ENCODE measurements at regions of chr7 and their contacts with region 1.

Region 1: GRCh38 chr7:26853788-26854393 is 10.5 kb downstream of the SKAP2 start:
- DNase-seq: no peak
- ATAC-seq: peak; percentile 57; the same call in 1 of the 2 replicates
- H3K4me3 ChIP-seq: no peak overlapping the region
- H3K27ac ChIP-seq: peak overlapping the region; percentile 55; the same call in 1 of the 2 replicates
- H3K4me1 ChIP-seq: peaks cover 43% of the 10 kb centered on the region
- H3K27me3 ChIP-seq: no peaks in the 10 kb centered on the region
- CTCF ChIP-seq: peak; percentile 77; the same call in 1 of the 2 replicates

Region 2: DNA sequence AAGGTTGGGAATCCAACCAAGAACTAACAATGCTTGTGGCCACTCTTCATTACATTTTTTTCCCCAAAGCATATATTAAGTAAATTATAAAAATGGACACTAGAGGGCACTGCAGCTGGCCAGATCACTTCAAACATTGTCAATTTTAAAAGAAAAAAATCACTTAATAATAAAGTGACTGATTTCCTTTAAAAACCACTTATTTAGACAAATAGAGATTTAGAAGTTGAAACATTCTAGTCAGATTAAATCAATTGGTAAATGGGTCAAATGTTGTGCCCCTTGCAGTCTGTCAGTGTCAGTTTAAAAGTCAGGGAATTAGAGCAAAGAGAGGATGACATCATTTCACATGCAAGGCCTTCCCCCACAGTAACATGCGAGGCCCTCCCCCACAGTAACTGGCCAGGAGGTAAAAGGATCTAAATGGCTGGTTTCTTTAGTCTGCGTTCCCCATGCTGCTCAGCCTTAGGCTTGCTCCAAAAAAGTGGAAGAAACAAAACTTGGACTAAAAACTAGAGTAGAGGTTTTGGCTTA is 167.4 kb before region 1 on chr7:
- CTCF ChIA-PET with region 1: no interaction called
- POLR2A ChIA-PET with region 1: interaction called, 3 read pairs
- in situ Hi-C with region 1: no loop called
- intact Hi-C with region 1: loop called (anchors 2 kb)
- DNase-seq: peak; percentile 38
- ATAC-seq: 0 out of 2 replicates have a peak, but pooled peaks have one; percentile 51
- H3K4me3 ChIP-seq: no peak overlapping the region
- H3K27ac ChIP-seq: no peak overlapping the region
- H3K4me1 ChIP-seq: peaks cover 6% of the 10 kb centered on the region; the same call in 1 of the 2 replicates
- H3K27me3 ChIP-seq: no peaks in the 10 kb centered on the region
- CTCF ChIP-seq: peak; percentile 86

Region 3: DNA sequence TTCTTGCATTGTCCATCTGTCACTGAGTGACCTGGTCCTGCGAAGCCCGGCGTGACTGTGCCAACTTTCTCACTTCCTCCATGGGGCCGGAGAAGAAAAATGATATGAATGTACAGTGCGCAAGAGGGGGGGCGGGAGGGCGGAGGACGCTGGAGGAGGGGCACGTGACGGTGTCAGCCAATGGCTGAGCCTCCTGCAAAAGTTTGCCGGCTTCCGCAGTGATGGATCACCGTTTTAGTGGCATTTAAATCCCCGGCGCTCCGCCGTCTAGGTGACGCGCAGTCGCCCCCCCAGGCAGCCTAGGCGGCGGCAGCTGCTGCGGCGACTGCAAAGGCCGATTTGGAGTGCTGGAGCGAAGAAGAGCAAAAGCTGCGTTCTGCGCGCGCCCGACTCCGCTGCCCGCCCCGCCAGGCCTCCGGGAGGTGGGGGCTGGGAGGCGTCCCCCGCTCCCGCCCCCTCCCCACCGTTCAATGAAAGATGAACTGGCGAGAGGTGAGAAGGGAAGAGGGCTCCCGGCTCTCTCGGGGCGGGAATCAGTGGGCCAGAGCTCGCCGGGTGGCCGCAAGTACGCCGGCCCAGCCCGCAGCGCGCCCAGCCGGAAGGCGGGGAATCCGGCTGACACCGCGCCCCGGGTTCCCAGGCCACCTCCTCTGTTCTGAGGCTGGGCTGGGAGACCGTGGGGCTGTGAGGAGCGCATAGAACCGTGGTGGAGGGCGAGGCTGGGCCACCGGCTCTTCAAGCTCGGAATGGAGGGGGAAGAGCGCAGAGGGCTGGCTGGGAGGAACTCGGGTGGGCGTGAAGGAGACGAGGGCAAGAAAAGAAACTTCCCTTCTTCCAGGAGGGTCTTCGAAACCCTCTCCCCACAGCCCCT is 242.2 kb after region 1 on chr7 and contains the start of gene HOXA1:
- CTCF ChIA-PET with region 1: interaction called, 6 read pairs
- POLR2A ChIA-PET with region 1: interaction called, 11 read pairs
- in situ Hi-C with region 1: no loop called
- intact Hi-C with region 1: no loop called
- DNase-seq: no peak
- ATAC-seq: peak; percentile 84
- H3K4me3 ChIP-seq: peak within 1 kb of the TSS; percentile 85 to 93
- H3K27ac ChIP-seq: peak within 1 kb of the TSS; percentile 99
- H3K4me1 ChIP-seq: peaks cover 60% of the 10 kb centered on the region
- H3K27me3 ChIP-seq: no peaks in the 10 kb centered on the region
- CTCF ChIP-seq: no peak; the same call in 1 of the 2 replicates
- total RNA-seq, gene HOXA1: 8.8 TPM

Region 4: GRCh38 chr7:27122077-27122910 is 268.4 kb after region 1 on chr7:
- CTCF ChIA-PET with region 1: interaction called, 5 read pairs
- POLR2A ChIA-PET with region 1: interaction called, 14 read pairs
- in situ Hi-C with region 1: no loop called
- intact Hi-C with region 1: no loop called
- DNase-seq: no peak
- ATAC-seq: peak; percentile 46
- H3K4me3 ChIP-seq: peak overlapping the region; percentile 51 to 67
- H3K27ac ChIP-seq: peak overlapping the region; percentile 99
- H3K4me1 ChIP-seq: peaks cover 85% of the 10 kb centered on the region
- H3K27me3 ChIP-seq: no peaks in the 10 kb centered on the region
- CTCF ChIP-seq: no peak

Region 5: DNA sequence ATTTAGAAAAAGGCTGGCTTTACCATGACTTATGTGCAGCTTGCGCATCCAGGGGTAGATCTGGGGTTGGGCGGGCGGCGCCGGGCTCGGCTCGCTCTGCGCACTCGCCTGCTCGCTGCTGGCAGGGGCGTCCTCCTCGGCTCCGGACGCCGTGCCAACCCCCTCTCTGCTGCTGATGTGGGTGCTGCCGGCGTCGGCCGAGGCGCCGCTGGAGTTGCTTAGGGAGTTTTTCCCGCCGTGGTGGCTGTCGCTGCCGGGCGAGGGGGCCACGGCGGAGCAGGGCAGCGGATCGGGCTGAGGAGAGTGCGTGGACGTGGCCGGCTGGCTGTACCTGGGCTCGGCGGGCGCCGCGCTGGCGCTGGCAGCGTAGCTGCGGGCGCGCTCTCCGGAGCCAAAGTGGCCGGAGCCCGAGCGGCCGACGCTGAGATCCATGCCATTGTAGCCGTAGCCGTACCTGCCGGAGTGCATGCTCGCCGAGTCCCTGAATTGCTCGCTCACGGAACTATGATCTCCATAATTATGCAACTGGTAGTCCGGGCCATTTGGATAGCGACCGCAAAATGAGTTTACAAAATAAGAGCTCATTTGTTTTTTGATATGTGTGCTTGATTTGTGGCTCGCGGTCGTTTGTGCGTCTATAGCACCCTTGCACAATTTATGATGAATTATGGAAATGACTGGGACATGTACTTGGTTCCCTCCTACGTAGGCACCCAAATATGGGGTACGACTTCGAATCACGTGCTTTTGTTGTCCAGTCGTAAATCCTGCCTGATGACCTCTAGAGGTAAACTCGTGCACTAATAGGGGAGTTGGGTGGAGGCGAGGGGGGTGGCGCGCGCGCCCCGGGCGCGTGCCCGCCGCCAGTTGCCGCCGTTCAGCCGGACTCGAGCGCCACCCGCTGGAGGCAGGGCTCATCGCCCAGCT is 289.4 kb after region 1 on chr7 and contains the start of gene HOXA5:
- CTCF ChIA-PET with region 1: interaction called, 5 read pairs
- POLR2A ChIA-PET with region 1: interaction called, 5 read pairs
- in situ Hi-C with region 1: loop called (anchors 5 kb)
- intact Hi-C with region 1: no loop called
- DNase-seq: peak; percentile 79
- ATAC-seq: peak; percentile 85
- H3K4me3 ChIP-seq: peak within 1 kb of the TSS; percentile 58 to 87
- H3K27ac ChIP-seq: peak within 1 kb of the TSS; percentile 84
- H3K4me1 ChIP-seq: peaks cover 14% of the 10 kb centered on the region
- H3K27me3 ChIP-seq: no peaks in the 10 kb centered on the region
- CTCF ChIP-seq: peak; percentile 95
- total RNA-seq, gene HOXA5: 3.9 TPM

Measured in Panc1 (cell line).